PC-9 (cell line): ENCODE measurements at regions of chr9 and their contacts with region 1.

Region 1: DNA sequence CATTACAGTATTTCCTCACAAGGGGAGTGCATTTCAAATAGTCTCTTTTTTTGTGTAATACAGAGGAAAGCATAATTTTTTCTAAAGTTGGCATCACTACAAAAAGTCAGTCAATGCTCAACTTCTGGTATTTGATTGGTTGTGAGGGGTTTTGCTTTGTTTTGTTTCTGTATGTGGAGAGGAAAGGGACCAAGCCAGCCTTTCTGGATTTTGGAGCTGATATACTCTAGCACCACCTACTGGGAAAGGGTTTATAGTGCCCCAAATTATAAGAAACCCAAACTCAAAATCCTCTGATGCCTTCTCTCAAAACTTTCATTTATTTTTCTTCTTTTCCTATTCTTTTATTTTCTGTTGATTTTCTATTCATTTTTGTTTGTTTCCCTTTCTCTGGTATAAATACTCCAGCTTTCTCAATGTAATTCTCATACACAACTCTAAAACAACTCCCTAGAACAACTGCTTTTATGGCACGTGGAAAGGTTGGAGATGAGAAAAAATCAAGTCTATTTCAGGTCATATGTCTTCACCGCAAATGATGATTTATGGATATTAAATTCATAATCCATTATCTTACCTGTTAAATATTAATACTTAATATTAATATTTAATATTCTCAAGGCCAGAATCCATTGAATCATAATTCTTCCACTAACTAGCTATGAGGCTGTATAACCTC is 69.5 kb upstream of the ANXA1 start:
- DNase-seq: no peak
- H3K4me3 ChIP-seq: no peak overlapping the region
- H3K27ac ChIP-seq: no peak overlapping the region
- H3K4me1 ChIP-seq: peaks cover 22% of the 10 kb centered on the region
- H3K27me3 ChIP-seq: no peaks in the 10 kb centered on the region
- CTCF ChIP-seq: peak; percentile 78

Region 2: DNA sequence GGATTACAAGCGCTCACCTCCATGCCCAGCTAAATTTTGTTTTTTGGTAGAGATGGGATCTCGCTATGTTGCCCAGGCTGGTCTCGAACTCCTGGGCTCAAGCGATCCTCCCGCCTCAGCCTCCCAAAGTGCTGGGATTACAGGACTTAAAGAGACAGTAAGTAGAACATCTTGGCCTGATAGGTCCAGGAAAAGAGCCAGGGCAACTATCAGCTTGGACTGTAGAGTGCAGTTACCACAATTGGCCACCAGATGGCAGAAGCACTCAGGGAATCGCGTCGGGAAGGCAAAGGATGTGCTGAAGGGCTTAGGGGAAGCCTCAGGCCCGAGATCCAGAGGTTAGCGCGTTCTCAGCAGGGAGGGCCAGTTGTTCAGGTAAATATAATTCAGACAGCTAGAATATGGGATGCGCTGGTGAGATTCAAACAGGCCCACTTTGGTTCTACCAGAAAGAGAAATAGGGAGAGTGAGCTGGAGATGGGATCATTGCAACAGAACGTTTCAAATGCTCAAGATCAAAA is 1043.2 kb before region 1 on chr9:
- CTCF ChIA-PET with region 1: no interaction called
- POLR2A ChIA-PET with region 1: no interaction called
- intact Hi-C with region 1: loop called (anchors 10 kb)
- DNase-seq: peak; percentile 46 to 82
- H3K4me3 ChIP-seq: no peak overlapping the region
- H3K27ac ChIP-seq: no peak overlapping the region
- H3K4me1 ChIP-seq: 0 out of 2 replicates have a peak, but pooled peaks cover 6% of the 10 kb centered on the region
- H3K27me3 ChIP-seq: no peaks in the 10 kb centered on the region
- CTCF ChIP-seq: peak; percentile 97

Region 3: DNA sequence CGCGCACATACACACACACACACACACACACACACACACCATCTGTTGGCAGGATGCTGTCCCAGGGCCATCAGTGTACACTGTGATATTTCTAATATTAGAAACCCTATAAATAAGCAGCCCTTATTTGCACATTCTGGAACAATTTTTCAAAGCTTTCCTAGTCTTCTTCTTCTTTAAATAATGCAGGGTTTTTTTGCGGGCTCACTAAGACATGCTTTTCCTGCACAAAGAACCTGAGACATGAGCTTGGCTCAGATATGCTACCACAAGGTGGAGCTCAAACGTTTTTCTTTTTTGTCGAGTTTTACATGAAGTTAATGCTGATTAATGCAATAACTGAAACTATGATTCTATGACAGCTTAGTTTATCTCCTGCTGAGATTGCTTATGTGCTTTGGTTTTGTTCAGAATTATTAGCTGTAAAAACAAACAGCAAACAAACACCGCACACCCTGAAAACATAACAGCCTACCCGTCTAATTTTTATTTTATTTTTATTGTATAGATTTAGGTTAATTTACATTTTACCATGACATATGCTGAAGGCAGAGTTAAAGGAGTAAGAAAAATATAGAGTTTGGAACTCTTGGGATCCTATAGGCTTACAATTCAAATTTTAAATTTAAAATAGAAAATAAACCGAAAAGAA is 225.0 kb before region 1 on chr9:
- CTCF ChIA-PET with region 1: interaction called, 6 read pairs
- POLR2A ChIA-PET with region 1: interaction called, 5 read pairs
- intact Hi-C with region 1: loop called (anchors 1 kb)
- DNase-seq: peak; percentile 42 to 58
- H3K4me3 ChIP-seq: no peak overlapping the region
- H3K27ac ChIP-seq: peak overlapping the region; percentile 80
- H3K4me1 ChIP-seq: peaks cover 16% of the 10 kb centered on the region
- H3K27me3 ChIP-seq: no peaks in the 10 kb centered on the region
- CTCF ChIP-seq: peak; percentile 77

Region 4: GRCh38 chr9:72978744-72979143 is 103.4 kb before region 1 on chr9:
- CTCF ChIA-PET with region 1: no interaction called
- POLR2A ChIA-PET with region 1: no interaction called
- intact Hi-C with region 1: loop called (anchors 10 kb)
- DNase-seq: peak in 1 of 2 experiments; percentile 66
- H3K4me3 ChIP-seq: no peak overlapping the region
- H3K27ac ChIP-seq: peak overlapping the region; percentile 24; the same call in 1 of the 2 replicates
- H3K4me1 ChIP-seq: peaks cover 9% of the 10 kb centered on the region
- H3K27me3 ChIP-seq: no peaks in the 10 kb centered on the region
- CTCF ChIP-seq: no peak

Region 5: DNA sequence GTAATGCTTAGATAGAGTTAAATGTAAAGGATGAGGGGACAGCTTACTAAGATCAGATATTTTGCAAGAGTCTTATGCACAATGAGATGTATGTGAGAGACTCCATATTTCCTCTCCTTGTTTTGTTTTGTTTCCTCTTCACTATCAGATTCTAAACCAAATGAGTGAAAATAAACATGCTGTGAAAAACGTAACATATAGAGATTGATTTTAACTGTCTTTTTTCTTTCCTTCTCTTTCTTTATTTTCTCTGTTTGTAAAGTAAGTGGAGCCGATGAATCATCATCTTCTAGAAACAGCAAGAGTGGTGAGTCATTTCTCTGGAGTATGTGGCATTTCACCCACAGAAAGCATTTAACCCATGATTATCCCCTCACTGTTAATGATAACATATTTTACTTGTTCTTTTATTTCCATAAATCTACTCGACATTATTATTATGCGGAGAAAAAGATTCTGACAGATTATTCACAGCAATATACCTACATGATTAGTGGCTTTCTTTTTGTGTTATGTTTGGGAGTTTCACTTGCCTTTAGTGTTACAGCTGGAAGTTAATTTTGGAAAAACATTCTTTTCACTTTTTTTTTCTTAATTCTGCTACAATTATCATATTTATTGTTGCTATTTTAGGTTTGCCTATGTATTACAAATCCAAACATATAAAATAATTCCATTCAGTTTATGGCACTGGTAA is 67.4 kb after region 1 on chr9:
- CTCF ChIA-PET with region 1: no interaction called
- POLR2A ChIA-PET with region 1: no interaction called
- intact Hi-C with region 1: loop called (anchors 1 kb)
- DNase-seq: peak in 1 of 2 experiments; percentile 81
- H3K4me3 ChIP-seq: no peak overlapping the region; the same call in 1 of the 2 replicates
- H3K27ac ChIP-seq: peak overlapping the region; percentile 86
- H3K4me1 ChIP-seq: peaks cover 67% of the 10 kb centered on the region
- H3K27me3 ChIP-seq: no peaks in the 10 kb centered on the region
- CTCF ChIP-seq: no peak